Sigmoid colon (tissue), 7 donors: ENCODE measurements at regions of chr6 and their contacts with region 1.

Region 1: GRCh38 chr6:95577304-95578105 is at the start of gene MANEA:
- DNase-seq: peak; percentile 93
- H3K4me3 ChIP-seq: peak within 1 kb of the TSS; percentile 67 to 81 (median 72)
- H3K27ac ChIP-seq: peak within 1 kb of the TSS; percentile 87 to 95 (median 92)
- H3K4me1 ChIP-seq: peaks cover 0 to 33% (median 17%) of the 10 kb centered on the region in 4 donors
- H3K27me3 ChIP-seq: no peaks in the 10 kb centered on the region
- CTCF ChIP-seq: no peak
- EP300 ChIP-seq: no peak
- POLR2A ChIP-seq: peak in 1 of 2 donors; percentile 21
- total RNA-seq, gene MANEA: 4.2 to 11.8 (median 7.7) TPM

Region 2: GRCh38 chr6:95511404-95511803 is 66.1 kb before region 1 on chr6:
- intact Hi-C with region 1: no loop called
- DNase-seq: no peak
- H3K4me3 ChIP-seq: no peak overlapping the region
- H3K27ac ChIP-seq: no peak overlapping the region
- H3K4me1 ChIP-seq: no peaks in the 10 kb centered on the region
- H3K27me3 ChIP-seq: no peaks in the 10 kb centered on the region
- CTCF ChIP-seq: no peak
- EP300 ChIP-seq: no peak
- POLR2A ChIP-seq: no peak

Region 3: DNA sequence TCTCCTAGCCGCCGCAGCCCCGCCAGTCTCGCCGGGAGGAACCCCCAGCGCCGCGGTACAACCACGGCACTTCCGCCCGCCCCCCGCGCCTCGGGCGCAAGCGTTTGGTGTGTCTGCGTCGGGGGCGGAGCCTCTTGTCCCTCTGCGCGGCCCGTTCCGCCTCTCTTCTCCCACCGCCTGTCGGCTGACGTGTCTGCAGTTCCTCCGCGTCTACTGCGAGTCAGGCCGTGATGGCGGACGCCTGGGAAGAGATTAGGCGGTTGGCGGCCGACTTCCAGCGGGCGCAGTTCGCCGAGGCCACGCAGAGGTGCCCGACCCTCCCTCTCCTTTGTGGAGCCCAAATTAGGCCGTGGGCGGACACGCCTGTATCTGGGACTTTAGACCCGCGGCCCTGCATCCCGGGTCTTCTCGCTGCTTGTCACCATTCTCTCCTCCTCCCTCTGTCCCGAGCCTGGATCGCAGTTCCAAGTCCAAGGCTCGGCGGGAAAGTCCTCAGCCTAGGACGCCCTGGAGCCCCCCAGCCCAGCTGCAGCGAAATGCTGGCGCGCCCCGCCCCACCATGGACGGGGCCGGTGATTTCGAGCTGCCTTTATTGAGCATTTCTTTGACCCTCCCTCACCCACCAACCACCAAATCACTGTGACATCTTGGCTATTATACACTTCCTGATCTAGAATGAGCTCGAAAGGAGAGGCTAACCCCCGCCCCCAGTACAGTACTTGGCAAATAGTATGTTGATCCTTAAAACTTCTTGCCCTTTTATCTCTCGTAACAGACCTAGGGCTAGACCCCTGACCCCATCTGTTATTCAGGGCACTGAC is 944.3 kb after region 1 on chr6 and contains the start of gene UFL1:
- intact Hi-C with region 1: loop called (anchors 5 kb)
- DNase-seq: peak; percentile 97
- H3K4me3 ChIP-seq: peak within 1 kb of the TSS; percentile 57 to 87 (median 82)
- H3K27ac ChIP-seq: peak within 1 kb of the TSS; percentile 89 to 96 (median 92)
- H3K4me1 ChIP-seq: peaks cover 0 to 30% (median 22%) of the 10 kb centered on the region in 4 donors
- H3K27me3 ChIP-seq: no peaks in the 10 kb centered on the region
- CTCF ChIP-seq: no peak
- EP300 ChIP-seq: no peak
- POLR2A ChIP-seq: peak; percentile 85 to 89
- total RNA-seq, gene UFL1: 21.9 to 30.1 (median 27.6) TPM

Region 4: DNA sequence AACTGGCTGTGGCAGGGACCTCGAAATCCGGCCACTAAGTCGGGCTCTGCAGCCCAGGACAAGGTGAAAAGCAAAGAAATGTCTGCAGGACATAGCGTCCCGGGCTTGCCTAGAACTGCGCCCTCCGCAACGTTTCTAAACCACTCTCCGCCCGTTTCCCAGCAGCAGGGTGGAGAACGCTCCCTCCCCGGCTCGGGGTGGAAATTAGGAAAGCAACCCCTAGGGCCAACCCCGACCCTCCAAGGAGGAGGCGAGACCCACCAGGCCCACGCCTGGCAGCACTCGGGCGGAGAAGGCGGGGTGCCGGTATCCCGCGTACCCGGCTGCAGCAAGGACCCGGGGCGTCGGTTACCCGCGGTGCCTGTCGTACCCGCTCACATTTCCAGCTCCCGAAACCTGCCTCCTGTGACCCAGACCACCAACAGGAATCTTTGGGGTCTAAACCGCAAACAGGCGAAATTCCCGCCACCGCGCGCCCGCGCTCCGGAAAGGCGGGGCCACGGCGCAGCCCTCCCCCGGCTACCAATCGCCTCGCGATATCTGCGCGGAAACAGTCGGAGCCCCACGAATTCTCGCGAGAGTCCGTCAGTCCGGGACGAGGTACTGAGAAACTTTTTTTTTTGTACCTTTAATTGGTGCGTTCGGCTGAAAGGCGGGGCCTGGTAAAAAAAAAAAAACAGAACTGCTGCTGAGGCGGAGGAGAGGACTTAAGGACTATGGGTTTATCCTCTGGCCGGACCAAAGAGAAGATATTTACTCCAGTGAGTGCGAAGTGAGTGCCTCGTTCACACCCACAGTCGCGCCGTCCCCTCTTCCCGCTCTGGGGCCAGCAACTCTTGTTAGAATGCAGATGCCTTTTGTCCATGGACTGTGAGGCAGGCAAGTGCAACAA is 1705.5 kb after region 1 on chr6 and contains the start of gene MMS22L:
- intact Hi-C with region 1: loop called (anchors 10 kb)
- DNase-seq: peak; percentile 96
- H3K4me3 ChIP-seq: peak within 1 kb of the TSS; percentile 82 to 98 (median 90)
- H3K27ac ChIP-seq: peak within 1 kb of the TSS; percentile 71 to 83 (median 78)
- H3K4me1 ChIP-seq: peaks cover 0 to 17% (median 10%) of the 10 kb centered on the region in 4 donors
- H3K27me3 ChIP-seq: no peaks in the 10 kb centered on the region
- CTCF ChIP-seq: no peak
- EP300 ChIP-seq: no peak
- POLR2A ChIP-seq: no peak
- total RNA-seq, gene MMS22L: 5.4 to 9.7 (median 6.7) TPM